Sciatic nerve (tissue), 2 donors: ENCODE measurements at regions of chrX and their contacts with region 1.

Region 1: GRCh38 chrX:140360284-140360683 is 144.6 kb downstream of the SOX3 start:
- DNase-seq: no peak
- ATAC-seq: no peak

Region 2: GRCh38 chrX:140292961-140293360 is 67.3 kb before region 1 on chrX:
- intact Hi-C with region 1: no loop called
- DNase-seq: no peak
- ATAC-seq: no peak

Region 3: GRCh38 chrX:140318296-140318695 is 42.0 kb before region 1 on chrX:
- intact Hi-C with region 1: no loop called
- DNase-seq: no peak
- ATAC-seq: no peak

Region 4: DNA sequence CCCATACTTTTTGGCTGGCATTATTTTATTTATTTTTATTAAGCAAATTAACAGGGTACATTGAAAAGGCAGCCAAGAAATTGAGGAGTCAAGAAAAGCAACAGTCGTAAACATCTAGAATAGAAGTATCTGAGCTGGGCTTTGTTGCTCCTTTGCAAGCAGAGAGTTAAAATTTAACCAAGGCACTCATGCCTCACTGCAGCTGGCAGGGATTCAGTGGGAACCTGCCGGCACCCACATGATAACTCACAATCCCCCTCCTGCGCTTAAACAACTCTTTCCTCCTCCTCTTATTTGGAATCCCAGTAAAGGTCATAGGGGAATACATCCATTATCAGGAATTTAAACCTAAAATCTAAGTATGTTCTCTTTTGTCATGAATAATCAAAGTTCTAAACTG is 29.0 kb after region 1 on chrX:
- intact Hi-C with region 1: loop called (anchors 1 kb)
- DNase-seq: no peak
- ATAC-seq: no peak

Region 5: DNA sequence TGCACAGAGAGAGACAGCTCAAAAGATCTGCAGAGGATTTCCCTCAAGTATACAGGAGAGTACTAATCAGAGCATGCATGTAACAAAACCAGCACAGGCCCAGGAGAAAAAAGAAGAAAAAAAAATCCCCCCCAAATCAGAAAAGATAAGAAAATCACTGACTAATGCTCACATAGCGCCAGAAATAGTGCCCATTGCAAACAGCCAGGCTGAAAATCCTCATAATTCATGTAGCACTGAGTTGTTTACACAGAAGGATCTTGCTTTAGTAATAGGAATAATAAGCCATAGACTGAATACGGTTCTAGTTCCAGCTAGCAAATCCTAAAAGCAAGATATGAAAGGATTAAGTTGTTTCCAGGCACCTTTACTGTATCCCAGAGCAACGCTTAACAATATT is 1896.7 kb after region 1 on chrX:
- intact Hi-C with region 1: loop called (anchors 5 kb)
- DNase-seq: no peak
- ATAC-seq: no peak